H1 (cell line): ENCODE measurements at regions of chr16 and their contacts with region 1.

Region 1: GRCh38 chr16:6633456-6633855 is 699.2 kb upstream of the RBFOX1 start:
- DNase-seq: no peak
- H3K4me3 ChIP-seq: no peak overlapping the region
- H3K27ac ChIP-seq: no peak overlapping the region
- H3K4me1 ChIP-seq: no peaks in the 10 kb centered on the region
- H3K27me3 ChIP-seq: no peaks in the 10 kb centered on the region
- CTCF ChIP-seq: no peak
- EP300 ChIP-seq: no peak
- POLR2A ChIP-seq: no peak
- RAD21 ChIP-seq: no peak

Region 2: DNA sequence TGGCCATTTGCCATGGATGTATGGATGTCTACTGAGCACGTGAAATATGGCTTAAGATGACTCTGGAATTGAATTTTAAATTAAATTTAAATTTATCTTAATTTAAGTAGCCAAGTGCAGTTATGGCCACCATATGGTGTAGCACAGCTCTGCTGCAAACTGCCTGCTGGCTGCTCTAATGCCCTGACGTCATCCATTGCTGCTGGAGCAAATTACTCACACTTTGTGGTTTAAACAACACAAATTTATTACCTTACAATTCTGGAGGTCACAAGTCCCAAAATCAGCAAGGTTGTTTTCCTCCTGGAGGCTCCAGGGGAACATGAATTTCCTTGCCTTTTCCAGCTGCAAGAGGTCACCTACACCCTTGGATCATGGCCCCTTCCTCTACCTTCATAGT is 856.6 kb before region 1 on chr16:
- CTCF ChIA-PET with region 1: no interaction called
- POLR2A ChIA-PET with region 1: no interaction called
- DNase-seq: no peak
- H3K4me3 ChIP-seq: no peak overlapping the region
- H3K27ac ChIP-seq: no peak overlapping the region
- H3K4me1 ChIP-seq: no peaks in the 10 kb centered on the region
- H3K27me3 ChIP-seq: no peaks in the 10 kb centered on the region
- CTCF ChIP-seq: no peak
- EP300 ChIP-seq: no peak
- POLR2A ChIP-seq: no peak
- RAD21 ChIP-seq: no peak

Region 3: GRCh38 chr16:6611535-6611934 is 21.9 kb before region 1 on chr16:
- CTCF ChIA-PET with region 1: interaction called, 18 read pairs
- POLR2A ChIA-PET with region 1: no interaction called
- DNase-seq: peak; percentile 7 to 61
- H3K4me3 ChIP-seq: no peak overlapping the region
- H3K27ac ChIP-seq: no peak overlapping the region
- H3K4me1 ChIP-seq: peaks cover 0 to 5% (median 0%) of the 10 kb centered on the region in 4 experiments; a peak in 2 of 7 replicates
- H3K27me3 ChIP-seq: no peaks in the 10 kb centered on the region
- CTCF ChIP-seq: peak; percentile 8 to 70 (median 54)
- EP300 ChIP-seq: no peak
- POLR2A ChIP-seq: no peak
- RAD21 ChIP-seq: peak; percentile 46 to 57

Region 4: GRCh38 chr16:6672507-6672906 is 39.1 kb after region 1 on chr16:
- CTCF ChIA-PET with region 1: no interaction called
- POLR2A ChIA-PET with region 1: no interaction called
- DNase-seq: no peak
- H3K4me3 ChIP-seq: no peak overlapping the region
- H3K27ac ChIP-seq: no peak overlapping the region
- H3K4me1 ChIP-seq: no peaks in the 10 kb centered on the region
- H3K27me3 ChIP-seq: no peaks in the 10 kb centered on the region; a peak in 1 of 7 replicates
- CTCF ChIP-seq: no peak
- EP300 ChIP-seq: no peak
- POLR2A ChIP-seq: no peak
- RAD21 ChIP-seq: no peak

Region 5: DNA sequence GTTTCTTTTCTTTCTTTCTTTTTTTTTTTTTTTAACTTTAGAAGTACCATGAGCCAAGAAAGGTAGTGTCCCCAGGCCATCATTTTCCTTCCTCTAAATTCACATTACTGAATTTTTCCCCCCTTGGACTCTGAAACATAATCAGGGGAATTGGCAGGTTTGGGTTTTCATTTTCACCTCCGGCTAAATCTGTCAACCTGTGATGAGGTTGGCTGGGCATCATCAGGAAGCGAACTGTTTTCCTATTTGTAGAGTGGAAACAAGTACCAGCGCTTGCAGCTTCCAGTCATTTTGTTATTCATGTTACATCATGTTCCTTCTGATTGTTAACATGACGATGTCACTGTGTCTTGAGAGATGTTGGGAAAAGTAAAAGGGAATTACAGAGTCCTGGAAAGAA is 57.3 kb after region 1 on chr16:
- CTCF ChIA-PET with region 1: no interaction called
- POLR2A ChIA-PET with region 1: no interaction called
- DNase-seq: no peak
- H3K4me3 ChIP-seq: no peak overlapping the region
- H3K27ac ChIP-seq: no peak overlapping the region
- H3K4me1 ChIP-seq: no peaks in the 10 kb centered on the region
- H3K27me3 ChIP-seq: no peaks in the 10 kb centered on the region
- CTCF ChIP-seq: no peak
- EP300 ChIP-seq: no peak
- POLR2A ChIP-seq: no peak
- RAD21 ChIP-seq: no peak